Activated naive CD4-positive, alpha-beta T cell treated with anti-CD3 and anti-CD28 coated beads for 36 hours (primary cell): ENCODE measurements at regions of chr21 and their contacts with region 1.

Region 1: DNA sequence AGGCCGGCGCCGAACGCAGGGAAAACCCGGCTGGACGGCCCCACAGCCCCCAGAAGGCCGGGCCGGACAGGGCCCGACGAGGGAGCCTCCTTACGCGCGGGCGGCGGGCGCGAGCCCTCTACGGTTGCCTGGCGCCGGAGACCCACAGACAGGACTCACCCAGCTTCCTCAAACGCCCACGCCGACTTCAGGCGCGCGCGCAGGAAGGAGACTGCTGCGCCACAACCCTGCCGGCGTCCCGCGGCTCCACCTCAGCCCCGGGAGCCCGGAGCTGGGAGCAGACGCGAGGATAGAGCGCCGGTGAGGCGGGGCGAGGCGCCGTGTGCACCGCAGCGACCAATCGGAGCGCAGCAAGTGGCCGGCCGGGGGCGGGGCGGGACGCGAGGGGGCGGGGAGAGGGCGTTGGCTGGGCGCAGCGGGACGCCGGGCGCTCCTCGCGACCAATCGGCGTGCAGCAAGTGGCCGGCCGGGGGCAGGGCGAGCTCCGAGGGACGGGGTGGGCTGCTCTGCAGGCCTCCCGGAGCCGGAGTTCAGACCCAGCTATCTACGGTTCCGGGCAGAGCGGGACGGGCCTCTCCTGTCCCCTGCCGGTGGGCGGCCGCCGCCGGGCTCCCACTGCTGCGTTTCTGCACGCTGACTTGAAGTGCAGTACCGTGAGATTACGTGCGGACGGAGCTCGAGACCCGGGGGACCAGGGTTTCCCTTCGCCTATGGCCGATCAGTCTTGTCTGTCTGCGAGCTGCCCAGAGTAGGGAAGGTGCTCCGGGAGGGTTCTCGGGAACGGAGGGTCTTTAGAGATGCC is at the start of gene TMEM50B:
- DNase-seq: peak; percentile 96
- H3K4me3 Mint-ChIP-seq: peak within 1 kb of the TSS; percentile 89
- H3K27ac Mint-ChIP-seq: peak within 1 kb of the TSS; percentile 68
- H3K4me1 Mint-ChIP-seq: peaks cover 15% of the 10 kb centered on the region
- H3K27me3 Mint-ChIP-seq: no peaks in the 10 kb centered on the region
- total RNA-seq, gene TMEM50B: 17.8 to 18.2 TPM

Region 2: DNA sequence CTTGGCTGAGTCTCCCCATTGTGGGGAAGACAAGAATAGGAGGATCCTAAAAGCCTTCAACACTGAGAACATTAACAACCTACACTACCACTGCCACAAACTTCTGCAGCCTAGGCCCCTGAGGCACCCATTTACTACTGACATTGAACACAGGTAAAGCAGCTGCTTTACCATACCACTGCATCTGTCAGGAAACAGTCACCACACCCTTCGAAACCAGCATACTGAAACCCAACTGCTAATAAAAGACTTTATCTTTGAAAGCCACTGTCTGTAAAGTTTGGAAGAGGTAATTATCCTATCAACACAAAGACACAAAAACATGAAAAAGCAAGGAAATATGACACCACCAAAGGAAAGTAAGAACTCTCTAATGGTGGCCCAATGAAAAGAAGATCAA is 147.7 kb before region 1 on chr21:
- CTCF ChIA-PET with region 1: no interaction called
- intact Hi-C with region 1: no loop called
- DNase-seq: peak; percentile 23
- H3K4me3 Mint-ChIP-seq: no peak overlapping the region
- H3K27ac Mint-ChIP-seq: peak overlapping the region; percentile 32
- H3K4me1 Mint-ChIP-seq: peaks cover 66% of the 10 kb centered on the region
- H3K27me3 Mint-ChIP-seq: no peaks in the 10 kb centered on the region

Region 3: GRCh38 chr21:33491373-33492102 is 11.7 kb after region 1 on chr21 and contains the start of gene DNAJC28:
- CTCF ChIA-PET with region 1: interaction called, 6 read pairs
- intact Hi-C with region 1: loop called (anchors 1 kb)
- DNase-seq: peak; percentile 92
- H3K4me3 Mint-ChIP-seq: peak within 1 kb of the TSS; percentile 99
- H3K27ac Mint-ChIP-seq: peak within 1 kb of the TSS; percentile 91
- H3K4me1 Mint-ChIP-seq: peaks cover 6% of the 10 kb centered on the region
- H3K27me3 Mint-ChIP-seq: no peaks in the 10 kb centered on the region
- total RNA-seq, gene DNAJC28: 0.17 TPM

Region 4: DNA sequence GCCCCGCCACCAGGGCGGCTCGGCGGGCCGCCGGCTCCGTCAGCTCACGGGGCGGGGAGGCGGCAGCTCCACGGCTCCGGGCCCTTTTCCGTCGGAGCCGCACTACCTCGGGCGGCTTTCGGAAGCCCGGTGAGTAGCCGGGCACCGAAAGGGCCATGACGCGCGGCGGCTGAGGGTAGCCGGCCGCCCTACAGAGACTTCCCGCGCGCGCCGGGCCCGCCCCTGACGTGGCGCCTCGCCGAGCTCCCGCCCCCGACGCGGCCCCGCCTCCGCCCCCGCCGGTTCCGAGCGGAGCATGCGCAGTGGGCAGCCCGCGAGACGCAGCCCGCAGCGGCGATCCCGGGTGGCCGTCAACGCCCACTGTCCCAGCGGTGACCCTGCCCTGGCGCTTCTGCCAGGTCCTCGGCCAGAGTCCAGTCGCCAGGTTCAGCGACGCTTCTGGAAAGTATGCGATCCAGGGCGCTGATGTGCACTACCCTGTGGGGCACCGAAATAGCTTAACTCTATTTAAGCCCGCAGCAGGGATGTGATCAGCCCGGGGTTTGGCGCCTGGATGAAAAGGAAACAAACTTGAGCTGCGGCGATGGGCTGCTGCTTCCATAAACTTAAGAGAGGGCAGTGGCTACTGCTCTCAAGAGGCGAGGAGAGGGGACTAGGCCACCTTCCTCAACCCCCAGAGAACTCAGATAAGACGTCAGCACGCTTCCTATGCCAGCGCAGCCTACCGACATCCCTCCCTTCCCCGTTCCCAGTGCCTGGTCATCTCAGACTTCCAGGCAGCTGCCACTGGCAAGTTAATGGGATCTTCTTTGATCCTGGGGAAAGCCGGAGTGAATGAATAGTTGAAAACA is 108.8 kb after region 1 on chr21 and contains the start of gene DONSON:
- CTCF ChIA-PET with region 1: interaction called, 3 read pairs
- intact Hi-C with region 1: loop called (anchors 1 kb)
- DNase-seq: peak; percentile 82
- H3K4me3 Mint-ChIP-seq: peak within 1 kb of the TSS; percentile 91
- H3K27ac Mint-ChIP-seq: peak within 1 kb of the TSS; percentile 77
- H3K4me1 Mint-ChIP-seq: peaks cover 15% of the 10 kb centered on the region
- H3K27me3 Mint-ChIP-seq: no peaks in the 10 kb centered on the region
- total RNA-seq, gene DONSON: 35.6 to 42.4 TPM